ENCODE measurements at regions of chr17 and their contacts with region 1.

Region 1: GRCh38 chr17:40168262-40168832 is 8.9 kb upstream of the RAPGEFL1 start:
- DNase-seq: peak; percentile 45
- ATAC-seq: peak; percentile 74
- H3K4me3 Mint-ChIP-seq: no peak overlapping the region
- H3K27ac Mint-ChIP-seq: peak overlapping the region; percentile 48
- H3K4me1 Mint-ChIP-seq: no peaks in the 10 kb centered on the region
- H3K27me3 Mint-ChIP-seq: no peaks in the 10 kb centered on the region

Region 2: GRCh38 chr17:40038882-40039513 is 129.3 kb before region 1 on chr17:
- CTCF ChIA-PET with region 1: interaction called, 3 read pairs
- POLR2A ChIA-PET with region 1: interaction called, 5 read pairs
- intact Hi-C with region 1: loop called in 1 of 2 experiments (anchors 5 kb)
- DNase-seq: no peak
- ATAC-seq: no peak
- H3K4me3 Mint-ChIP-seq: no peak overlapping the region
- H3K27ac Mint-ChIP-seq: no peak overlapping the region
- H3K4me1 Mint-ChIP-seq: no peaks in the 10 kb centered on the region
- H3K27me3 Mint-ChIP-seq: no peaks in the 10 kb centered on the region

Region 3: GRCh38 chr17:40075201-40075941 is 93.0 kb before region 1 on chr17:
- CTCF ChIA-PET with region 1: interaction called, 12 read pairs
- POLR2A ChIA-PET with region 1: no interaction called
- intact Hi-C with region 1: no loop called
- DNase-seq: peak; percentile 83
- ATAC-seq: peak; percentile 88
- H3K4me3 Mint-ChIP-seq: no peak overlapping the region
- H3K27ac Mint-ChIP-seq: peak overlapping the region; percentile 72
- H3K4me1 Mint-ChIP-seq: peaks cover 33% of the 10 kb centered on the region
- H3K27me3 Mint-ChIP-seq: no peaks in the 10 kb centered on the region

Region 4: DNA sequence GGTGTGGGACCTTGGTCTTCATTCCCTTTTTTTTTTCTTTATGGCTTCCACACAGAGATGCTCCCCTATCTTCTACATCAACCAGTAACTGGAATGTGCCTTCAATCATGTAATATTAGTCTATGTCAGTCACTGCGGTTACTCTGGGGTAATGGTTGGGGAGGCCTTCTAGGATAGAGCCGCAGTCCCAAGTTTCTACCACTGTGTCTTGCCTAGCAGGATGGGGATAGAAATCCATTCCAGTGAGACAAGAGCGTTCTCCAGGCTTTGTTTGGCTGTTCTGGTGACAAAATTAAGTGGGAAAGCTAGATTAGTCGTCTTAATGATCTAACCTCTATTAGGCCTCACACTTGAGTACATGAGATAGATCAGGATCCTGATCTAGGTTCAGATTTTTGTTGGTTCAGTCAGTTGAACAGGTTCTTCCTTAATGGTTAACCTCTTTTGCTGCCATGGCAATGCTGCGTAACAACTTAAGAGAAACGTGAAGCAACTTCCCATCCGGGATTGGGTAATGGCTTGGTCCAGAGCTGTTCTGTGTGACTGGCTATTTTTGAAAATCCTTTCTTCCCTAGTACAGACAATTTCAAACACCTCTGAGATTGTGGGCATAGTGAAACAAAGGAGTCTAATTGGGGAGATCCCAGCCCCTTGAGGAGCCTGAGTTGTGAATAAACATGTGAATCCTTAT is 37.9 kb before region 1 on chr17:
- CTCF ChIA-PET with region 1: interaction called, 10 read pairs
- POLR2A ChIA-PET with region 1: no interaction called
- intact Hi-C with region 1: no loop called
- DNase-seq: no peak
- ATAC-seq: no peak
- H3K4me3 Mint-ChIP-seq: no peak overlapping the region
- H3K27ac Mint-ChIP-seq: peak overlapping the region; percentile 62
- H3K4me1 Mint-ChIP-seq: peaks cover 11% of the 10 kb centered on the region
- H3K27me3 Mint-ChIP-seq: no peaks in the 10 kb centered on the region

Region 5: DNA sequence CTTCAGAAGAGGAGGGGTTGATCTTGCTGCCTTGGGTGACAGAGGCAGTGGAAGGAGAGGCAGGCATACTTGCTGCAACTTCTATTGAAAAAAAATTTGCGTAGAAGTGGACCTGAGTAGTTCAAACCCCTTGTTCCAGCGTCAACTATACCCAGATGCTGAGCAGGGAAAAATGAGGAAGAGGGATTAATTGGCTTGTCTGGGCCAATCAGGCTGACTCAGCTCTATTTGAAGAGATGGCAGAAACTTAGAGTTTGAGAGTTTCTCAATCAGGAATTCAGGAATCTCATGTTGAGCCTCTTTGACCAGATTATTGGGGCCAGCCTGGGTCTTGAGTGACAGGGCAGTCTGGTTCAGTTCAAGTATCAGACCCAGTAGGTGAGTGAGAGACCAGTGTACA is 10.4 kb before region 1 on chr17:
- CTCF ChIA-PET with region 1: interaction called, 17 read pairs
- POLR2A ChIA-PET with region 1: interaction called, 3 read pairs
- intact Hi-C with region 1: no loop called
- DNase-seq: no peak
- ATAC-seq: no peak
- H3K4me3 Mint-ChIP-seq: no peak overlapping the region
- H3K27ac Mint-ChIP-seq: peak overlapping the region; percentile 24
- H3K4me1 Mint-ChIP-seq: peaks cover 35% of the 10 kb centered on the region
- H3K27me3 Mint-ChIP-seq: no peaks in the 10 kb centered on the region